ENCODE measurements at regions of chr1 and their contacts with region 1.

Region 1: GRCh38 chr1:23296931-23297330 is 47.2 kb downstream of the HNRNPR start:
- DNase-seq: no peak
- H3K4me3 Mint-ChIP-seq: no peak overlapping the region
- H3K27ac Mint-ChIP-seq: no peak overlapping the region
- H3K4me1 Mint-ChIP-seq: no peaks in the 10 kb centered on the region
- H3K27me3 Mint-ChIP-seq: no peaks in the 10 kb centered on the region

Region 2: DNA sequence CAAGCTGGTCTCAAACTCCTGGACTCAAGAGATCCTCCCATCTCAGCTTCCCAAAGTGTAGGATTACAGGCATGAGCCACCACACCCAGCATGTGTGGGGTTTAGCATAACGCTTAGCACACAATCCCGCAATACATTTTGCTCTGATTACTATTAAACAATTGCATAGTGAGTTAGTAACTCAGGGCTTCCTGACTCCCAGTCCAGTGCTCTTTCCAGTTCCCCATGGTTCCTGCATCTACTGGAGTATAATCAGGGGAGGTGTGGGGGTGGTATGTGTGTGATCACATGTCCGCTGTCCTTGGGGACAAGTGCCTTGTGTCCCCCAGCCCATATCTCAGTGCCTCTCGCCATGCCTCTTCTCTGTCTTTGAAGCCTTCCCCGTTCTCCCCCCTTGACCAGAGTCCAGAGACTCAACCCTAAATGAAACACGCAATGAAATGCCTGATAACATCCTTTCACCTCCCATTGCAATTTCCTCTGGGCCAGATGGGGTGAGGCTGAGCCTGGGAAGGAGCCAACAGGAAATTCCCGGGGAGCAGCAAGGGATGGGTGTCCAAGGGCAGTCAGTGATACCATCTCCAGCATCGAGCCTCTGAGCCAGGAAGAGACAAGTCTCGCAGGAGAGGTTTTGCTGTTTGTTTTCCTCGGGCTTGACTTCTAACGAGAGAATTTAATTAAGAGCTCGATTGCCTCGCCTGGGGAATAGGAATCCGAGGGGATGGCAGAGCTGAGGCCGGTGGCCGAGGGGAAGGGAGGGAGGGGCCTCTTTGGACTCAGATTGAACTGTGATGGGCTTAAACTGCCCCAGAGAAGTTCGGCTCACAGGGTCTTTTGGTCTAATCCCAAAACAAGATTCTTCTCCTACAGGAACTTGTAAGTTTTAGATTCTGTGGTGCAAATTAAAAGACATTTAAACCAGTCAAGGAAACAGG is 72.0 kb before region 1 on chr1:
- intact Hi-C with region 1: no loop called
- DNase-seq: no peak
- H3K4me3 Mint-ChIP-seq: no peak overlapping the region
- H3K27ac Mint-ChIP-seq: no peak overlapping the region
- H3K4me1 Mint-ChIP-seq: no peaks in the 10 kb centered on the region
- H3K27me3 Mint-ChIP-seq: peaks cover 32% of the 10 kb centered on the region

Region 3: GRCh38 chr1:23403735-23404486 is 107.0 kb after region 1 on chr1:
- intact Hi-C with region 1: loop called (anchors 5 kb)
- DNase-seq: peak; percentile 74
- H3K4me3 Mint-ChIP-seq: no peak overlapping the region
- H3K27ac Mint-ChIP-seq: no peak overlapping the region
- H3K4me1 Mint-ChIP-seq: peaks cover 11% of the 10 kb centered on the region
- H3K27me3 Mint-ChIP-seq: no peaks in the 10 kb centered on the region

Measured in activated T-helper 2 cell treated with anti-CD3 and anti-CD28 coated beads, Interferon-gamma antibody, Interleukin-2, Interleukin-4, amounts not matched to agents 10 μg/mL and 5 μg/mL and 100 μg/mL, durations not matched to agents 14 hours and 24 hours and 36 hours (primary cell).